HepG2 (cell line): ENCODE measurements at regions of chr20 and their contacts with region 1.

Region 1: DNA sequence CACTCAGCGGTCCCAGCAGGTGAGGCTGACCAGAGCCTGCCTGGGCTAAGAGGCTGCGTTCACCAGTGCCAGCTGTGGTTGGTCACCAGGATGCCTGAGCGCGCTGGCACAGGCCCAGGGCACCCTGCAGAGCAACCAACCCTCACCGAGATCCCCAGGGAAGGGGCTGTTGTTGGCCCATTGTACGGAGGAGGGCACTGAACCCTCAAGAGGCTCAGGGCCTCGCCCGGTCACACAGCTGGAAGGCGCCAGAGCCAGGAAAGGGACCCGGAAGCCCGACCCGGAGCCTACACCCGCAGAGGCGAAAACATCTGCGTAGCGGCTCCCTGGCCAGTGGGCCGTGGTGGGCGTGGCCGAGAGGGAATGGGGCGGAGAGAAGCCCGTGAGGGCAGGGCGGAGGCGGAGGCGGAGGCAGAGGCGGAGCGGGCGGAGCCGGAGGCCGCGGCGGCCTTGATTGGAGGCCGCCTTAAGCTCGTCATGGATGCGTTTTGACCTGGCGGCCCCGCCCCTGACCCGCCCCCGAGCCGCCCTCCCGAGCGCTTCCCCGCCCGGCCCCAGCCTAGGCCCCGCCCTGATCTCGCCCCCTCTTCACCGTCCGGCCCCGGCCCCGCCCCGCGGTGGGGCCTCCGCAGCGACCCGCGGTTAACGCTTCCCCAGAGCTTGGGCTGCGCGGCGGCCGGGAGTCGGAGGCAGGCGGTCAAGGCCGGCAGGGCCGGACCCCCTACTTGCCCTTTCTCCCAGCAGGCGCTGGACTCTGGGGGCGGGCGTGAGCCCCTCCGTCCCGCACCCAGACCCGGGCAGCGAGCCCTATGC is 2.2 kb upstream of the MRGBP start:
- DNase-seq: peak; percentile 94
- ATAC-seq: peak; percentile 73
- H3K4me3 ChIP-seq: peak overlapping the region; percentile 66 to 82 (median 79)
- H3K27ac ChIP-seq: peak overlapping the region; percentile 89
- H3K4me1 ChIP-seq: peaks cover 47% of the 10 kb centered on the region
- H3K27me3 ChIP-seq: peaks cover 6 to 30% of the 10 kb centered on the region in 2 experiments; a peak in 4 of 5 replicates
- CTCF ChIP-seq: peak; percentile 44
- EP300 ChIP-seq: no peak
- POLR2A ChIP-seq: peak in 1 of 2 experiments; percentile 79; a peak in 2 of 4 replicates
- RAD21 ChIP-seq: peak; percentile 69

Region 2: GRCh38 chr20:62409931-62410745 is 384.0 kb before region 1 on chr20:
- CTCF ChIA-PET with region 1: no interaction called
- POLR2A ChIA-PET with region 1: interaction called, 10 read pairs
- in situ Hi-C with region 1: no loop called
- intact Hi-C with region 1: no loop called
- DNase-seq: peak; percentile 42
- ATAC-seq: peak; percentile 14; the same call in 2 of the 3 replicates
- H3K4me3 ChIP-seq: peak overlapping the region in 1 of 3 experiments; percentile 70; a peak in 1 of 6 replicates
- H3K27ac ChIP-seq: no peak overlapping the region
- H3K4me1 ChIP-seq: peaks cover 79% of the 10 kb centered on the region
- H3K27me3 ChIP-seq: peaks cover 12 to 32% of the 10 kb centered on the region in 2 experiments
- CTCF ChIP-seq: peak; percentile 96
- EP300 ChIP-seq: no peak
- POLR2A ChIP-seq: no peak
- RAD21 ChIP-seq: peak; percentile 61

Region 3: DNA sequence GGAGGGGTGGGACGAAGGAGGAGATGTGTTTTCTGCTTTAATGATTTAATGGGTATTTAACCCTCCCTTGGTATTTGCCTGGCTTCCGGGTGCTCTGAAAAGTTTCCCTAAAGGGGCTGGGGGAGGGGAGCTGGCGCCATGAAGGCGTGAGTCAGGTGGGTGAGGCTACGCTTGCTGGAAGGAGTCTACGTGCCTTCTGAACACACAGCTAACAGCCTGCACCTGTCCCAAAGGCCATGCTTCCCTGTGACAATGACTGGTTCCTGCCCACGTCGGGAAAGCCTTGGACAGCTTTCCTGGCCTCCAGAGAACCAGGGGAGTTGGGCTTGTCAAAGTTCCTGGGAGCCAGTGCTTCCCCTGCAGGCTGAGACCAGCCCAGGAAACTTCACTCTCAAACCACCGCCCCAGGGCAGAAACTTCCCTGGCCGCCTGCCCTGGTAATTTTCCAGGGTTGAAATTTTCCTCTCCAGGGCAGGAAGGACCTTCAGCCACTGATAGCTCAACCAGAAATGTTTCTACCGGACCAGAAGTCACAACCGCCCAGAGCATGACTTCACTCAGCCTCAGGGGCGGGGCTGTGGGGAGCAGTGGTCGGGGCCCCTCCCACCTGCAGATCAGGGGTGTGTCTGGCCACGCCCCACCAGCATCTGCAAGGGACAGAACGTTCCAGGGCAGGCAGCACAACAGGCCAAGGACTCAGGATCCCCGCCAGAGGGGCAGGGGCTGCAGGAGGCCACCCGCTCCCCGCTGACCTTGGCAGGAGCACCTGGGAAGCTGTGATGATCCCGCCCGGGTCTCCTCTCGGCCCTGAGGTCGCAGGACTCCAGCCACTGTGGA is 170.4 kb before region 1 on chr20:
- CTCF ChIA-PET with region 1: interaction called, 10 read pairs
- POLR2A ChIA-PET with region 1: interaction called, 37 read pairs
- in situ Hi-C with region 1: loop called (anchors 5 kb)
- intact Hi-C with region 1: no loop called
- DNase-seq: peak; percentile 98
- ATAC-seq: peak; percentile 87
- H3K4me3 ChIP-seq: peak overlapping the region; percentile 31 to 65 (median 37); a peak in 5 of 6 replicates
- H3K27ac ChIP-seq: peak overlapping the region; percentile 95
- H3K4me1 ChIP-seq: peaks cover 68% of the 10 kb centered on the region
- H3K27me3 ChIP-seq: peaks cover 2 to 8% of the 10 kb centered on the region in 2 experiments; a peak in 3 of 5 replicates
- CTCF ChIP-seq: peak; percentile 6; the same call in 1 of the 2 replicates
- EP300 ChIP-seq: peak; percentile 16 to 83; a peak in 3 of 4 replicates
- POLR2A ChIP-seq: peak in 1 of 2 experiments; percentile 82; a peak in 2 of 4 replicates
- RAD21 ChIP-seq: no peak

Region 4: GRCh38 chr20:62694868-62695267 is 99.2 kb before region 1 on chr20:
- CTCF ChIA-PET with region 1: interaction called, 10 read pairs
- POLR2A ChIA-PET with region 1: no interaction called
- in situ Hi-C with region 1: no loop called
- intact Hi-C with region 1: no loop called
- DNase-seq: no peak
- ATAC-seq: no peak
- H3K4me3 ChIP-seq: no peak overlapping the region
- H3K27ac ChIP-seq: no peak overlapping the region
- H3K4me1 ChIP-seq: no peaks in the 10 kb centered on the region; the same call in 1 of the 2 replicates
- H3K27me3 ChIP-seq: peaks cover 57 to 98% of the 10 kb centered on the region in 2 experiments
- CTCF ChIP-seq: no peak
- EP300 ChIP-seq: no peak
- POLR2A ChIP-seq: no peak
- RAD21 ChIP-seq: no peak

Region 5: DNA sequence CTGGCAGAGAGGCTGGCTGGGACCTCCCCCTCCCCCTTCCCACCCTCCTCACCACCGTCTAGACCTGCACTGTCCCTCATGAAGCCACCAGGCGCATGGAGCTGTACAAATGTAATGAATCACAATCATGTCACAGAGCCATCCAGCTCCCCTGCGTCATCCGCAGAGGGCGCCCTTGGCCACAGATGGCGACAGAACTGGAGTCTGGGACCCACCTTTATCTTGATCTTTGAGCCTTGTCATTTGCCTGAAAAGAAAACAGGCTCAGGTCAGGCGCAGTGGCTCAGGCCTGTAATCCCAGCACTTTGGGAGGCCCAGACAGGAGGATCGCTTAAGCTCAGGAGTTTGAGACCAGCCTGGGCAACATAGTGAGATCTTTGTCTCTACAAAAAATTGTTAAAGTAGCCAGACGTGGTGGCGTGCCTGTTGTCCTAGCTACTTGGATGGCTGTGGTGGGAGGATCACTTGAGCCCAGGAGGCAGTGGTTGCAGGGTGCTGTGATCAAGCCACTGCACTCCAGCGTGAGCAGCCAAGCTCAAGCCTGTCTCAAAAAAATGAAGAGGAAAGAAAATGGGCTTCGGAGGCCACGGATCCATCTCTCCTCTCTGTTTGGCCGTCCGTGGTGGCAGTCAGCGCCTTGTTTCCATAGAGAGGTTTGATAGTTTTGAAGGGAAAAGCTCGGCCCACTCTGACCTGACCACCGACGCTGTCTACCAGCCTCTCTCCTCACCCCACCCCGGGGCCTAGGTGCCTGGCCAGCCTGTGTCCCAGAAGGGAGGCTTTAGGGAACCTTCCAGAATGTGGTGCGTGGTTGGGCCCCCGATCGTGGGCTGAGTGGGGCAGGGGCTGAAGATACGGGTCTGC is 28.9 kb after region 1 on chr20:
- CTCF ChIA-PET with region 1: interaction called, 5 read pairs
- POLR2A ChIA-PET with region 1: interaction called, 64 read pairs
- in situ Hi-C with region 1: no loop called
- intact Hi-C with region 1: no loop called
- DNase-seq: peak; percentile 98
- ATAC-seq: peak; percentile 61
- H3K4me3 ChIP-seq: peak overlapping the region in 1 of 3 experiments; percentile 71; a peak in 1 of 6 replicates
- H3K27ac ChIP-seq: peak overlapping the region; percentile 59
- H3K4me1 ChIP-seq: peaks cover 68% of the 10 kb centered on the region
- H3K27me3 ChIP-seq: no peaks in the 10 kb centered on the region
- CTCF ChIP-seq: peak; percentile 99
- EP300 ChIP-seq: peak; percentile 18 to 69; a peak in 3 of 4 replicates
- POLR2A ChIP-seq: 0 out of 4 replicates have a peak, but pooled peaks have one; percentile 3 to 35
- RAD21 ChIP-seq: peak; percentile 98

Region 6: GRCh38 chr20:62891111-62891510 is 97.0 kb after region 1 on chr20:
- CTCF ChIA-PET with region 1: no interaction called
- POLR2A ChIA-PET with region 1: no interaction called
- in situ Hi-C with region 1: no loop called
- intact Hi-C with region 1: no loop called
- DNase-seq: no peak
- ATAC-seq: no peak
- H3K4me3 ChIP-seq: no peak overlapping the region
- H3K27ac ChIP-seq: no peak overlapping the region
- H3K4me1 ChIP-seq: peaks cover 15% of the 10 kb centered on the region
- H3K27me3 ChIP-seq: no peaks in the 10 kb centered on the region
- CTCF ChIP-seq: no peak
- EP300 ChIP-seq: no peak
- POLR2A ChIP-seq: no peak
- RAD21 ChIP-seq: no peak